ENCODE measurements at regions of chr1 and their contacts with region 1.

Region 1: DNA sequence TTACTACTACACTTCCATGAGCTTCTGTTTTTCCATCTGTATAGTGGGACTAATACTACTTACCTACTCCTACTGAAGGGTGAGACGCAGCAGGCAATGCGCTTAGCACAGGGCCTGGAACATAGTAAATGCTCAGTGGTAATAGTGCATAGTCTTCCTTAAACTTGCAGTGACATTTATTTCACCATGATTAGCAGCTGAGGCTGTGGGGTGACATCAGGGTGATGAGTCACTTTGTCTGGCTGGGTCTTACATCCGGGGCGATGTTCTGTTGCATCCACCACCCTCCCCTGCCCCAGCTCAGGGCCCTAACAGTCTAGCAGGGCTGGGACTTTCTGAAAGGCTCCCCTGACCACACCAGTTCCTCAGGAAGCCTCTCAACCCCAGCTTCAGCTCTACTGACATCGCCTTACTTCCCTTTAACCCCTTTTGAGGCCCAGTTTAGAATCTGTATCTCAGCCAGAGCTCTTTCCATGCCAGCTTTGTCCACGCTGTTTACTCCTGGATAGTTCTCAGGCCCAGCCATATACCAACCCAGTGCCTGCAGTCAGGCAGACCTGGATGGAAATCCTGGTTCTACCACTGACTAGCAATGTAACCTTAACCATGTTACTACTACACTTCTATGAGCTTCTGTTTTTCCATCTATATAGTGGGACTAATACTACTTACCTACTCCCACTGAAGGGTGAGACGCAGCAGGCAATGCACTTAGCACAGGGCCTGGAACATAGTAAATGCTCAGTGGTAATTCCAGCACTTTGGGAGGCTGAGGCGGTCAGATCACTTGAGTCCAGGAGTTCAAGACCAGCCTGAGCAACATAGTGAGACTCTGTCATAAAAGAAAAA is 66.3 kb downstream of the CD58 start:
- DNase-seq: peak; percentile 85
- H3K4me3 Mint-ChIP-seq: peak overlapping the region; percentile 47
- H3K27ac Mint-ChIP-seq: peak overlapping the region; percentile 98
- H3K4me1 Mint-ChIP-seq: peaks cover 74% of the 10 kb centered on the region
- H3K27me3 Mint-ChIP-seq: no peaks in the 10 kb centered on the region

Region 2: GRCh38 chr1:115642168-115643072 is 862.1 kb before region 1 on chr1:
- intact Hi-C with region 1: loop called (anchors 10 kb)
- DNase-seq: peak; percentile 43
- H3K4me3 Mint-ChIP-seq: peak overlapping the region; percentile 83
- H3K27ac Mint-ChIP-seq: peak overlapping the region; percentile 25
- H3K4me1 Mint-ChIP-seq: peaks cover 15% of the 10 kb centered on the region
- H3K27me3 Mint-ChIP-seq: peaks cover 20% of the 10 kb centered on the region

Region 3: GRCh38 chr1:116377541-116378529 is 126.7 kb before region 1 on chr1:
- intact Hi-C with region 1: loop called (anchors 2 kb)
- DNase-seq: peak; percentile 28
- H3K4me3 Mint-ChIP-seq: peak overlapping the region; percentile 78
- H3K27ac Mint-ChIP-seq: peak overlapping the region; percentile 75
- H3K4me1 Mint-ChIP-seq: peaks cover 66% of the 10 kb centered on the region
- H3K27me3 Mint-ChIP-seq: no peaks in the 10 kb centered on the region

Region 4: GRCh38 chr1:116514708-116515525 is 10.4 kb after region 1 on chr1:
- intact Hi-C with region 1: loop called (anchors 1 kb)
- DNase-seq: peak; percentile 68
- H3K4me3 Mint-ChIP-seq: peak overlapping the region; percentile 50
- H3K27ac Mint-ChIP-seq: peak overlapping the region; percentile 94
- H3K4me1 Mint-ChIP-seq: peaks cover 63% of the 10 kb centered on the region
- H3K27me3 Mint-ChIP-seq: no peaks in the 10 kb centered on the region

Region 5: GRCh38 chr1:116570358-116571200 is 66.0 kb after region 1 on chr1 and contains the start of gene CD58:
- intact Hi-C with region 1: loop called (anchors 2 kb)
- DNase-seq: peak; percentile 78
- H3K4me3 Mint-ChIP-seq: peak within 1 kb of the TSS; percentile 97
- H3K27ac Mint-ChIP-seq: peak within 1 kb of the TSS; percentile 91
- H3K4me1 Mint-ChIP-seq: peaks cover 65% of the 10 kb centered on the region
- H3K27me3 Mint-ChIP-seq: no peaks in the 10 kb centered on the region
- total RNA-seq, gene CD58: 40.6 and 40.9 TPM in 2 replicates

Region 6: GRCh38 chr1:116763787-116764465 is 259.4 kb after region 1 on chr1:
- intact Hi-C with region 1: loop called (anchors 2 kb)
- DNase-seq: no peak
- H3K4me3 Mint-ChIP-seq: peak overlapping the region; percentile 84
- H3K27ac Mint-ChIP-seq: peak overlapping the region; percentile 100
- H3K4me1 Mint-ChIP-seq: peaks cover 88% of the 10 kb centered on the region
- H3K27me3 Mint-ChIP-seq: no peaks in the 10 kb centered on the region

Region 7: DNA sequence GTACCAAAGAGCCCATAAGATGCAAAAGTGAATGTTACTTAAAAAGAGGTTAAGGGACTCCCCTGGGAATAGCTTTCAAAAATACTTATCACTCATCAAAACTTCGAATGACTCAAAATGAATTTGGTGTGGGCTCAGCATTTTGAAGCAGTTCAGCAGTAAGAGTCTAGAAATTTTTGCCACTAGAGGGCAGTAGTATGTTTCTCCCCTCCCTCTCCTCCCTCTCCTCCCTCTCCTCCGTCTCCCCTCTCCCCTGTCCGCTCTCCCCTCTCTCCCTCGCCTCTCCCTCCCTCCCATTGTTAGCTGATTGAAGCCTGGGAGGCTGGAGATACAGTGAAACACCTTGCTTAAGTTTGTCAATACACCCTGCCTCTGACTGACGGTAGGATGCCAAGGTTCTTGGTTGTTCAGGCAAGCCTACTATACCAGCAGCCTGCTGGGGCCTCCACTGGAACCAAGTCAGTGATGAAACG is 1030.5 kb after region 1 on chr1:
- intact Hi-C with region 1: loop called (anchors 10 kb)
- DNase-seq: peak; percentile 25
- H3K4me3 Mint-ChIP-seq: no peak overlapping the region
- H3K27ac Mint-ChIP-seq: no peak overlapping the region
- H3K4me1 Mint-ChIP-seq: peaks cover 12% of the 10 kb centered on the region
- H3K27me3 Mint-ChIP-seq: no peaks in the 10 kb centered on the region

Measured in activated T-helper 2 cell treated with anti-CD3 and anti-CD28 coated beads, Interferon-gamma antibody, Interleukin-2, Interleukin-4, amounts not matched to agents 10 μg/mL and 5 μg/mL and 100 μg/mL, durations not matched to agents 14 hours and 24 hours and 36 hours (primary cell).